ENCODE measurements at regions of chr11 and their contacts with region 1.

Region 1: GRCh38 chr11:90380206-90380605 is 157.4 kb upstream of the CHORDC1 start:
- DNase-seq: no peak
- ATAC-seq: no peak
- H3K4me3 ChIP-seq: no peak overlapping the region
- H3K27ac ChIP-seq: no peak overlapping the region
- H3K4me1 ChIP-seq: no peaks in the 10 kb centered on the region
- H3K27me3 ChIP-seq: no peaks in the 10 kb centered on the region
- CTCF ChIP-seq: no peak
- EP300 ChIP-seq: no peak
- POLR2A ChIP-seq: no peak
- RAD21 ChIP-seq: no peak

Region 2: GRCh38 chr11:90218606-90219005 is 161.6 kb before region 1 on chr11:
- CTCF ChIA-PET with region 1: no interaction called
- POLR2A ChIA-PET with region 1: no interaction called
- in situ Hi-C with region 1: no loop called
- intact Hi-C with region 1: no loop called
- DNase-seq: no peak
- ATAC-seq: no peak
- H3K4me3 ChIP-seq: no peak overlapping the region
- H3K27ac ChIP-seq: no peak overlapping the region
- H3K4me1 ChIP-seq: peaks cover 28% of the 10 kb centered on the region
- H3K27me3 ChIP-seq: no peaks in the 10 kb centered on the region; a peak in 1 of 5 replicates
- CTCF ChIP-seq: no peak
- EP300 ChIP-seq: no peak
- POLR2A ChIP-seq: no peak
- RAD21 ChIP-seq: no peak

Region 3: DNA sequence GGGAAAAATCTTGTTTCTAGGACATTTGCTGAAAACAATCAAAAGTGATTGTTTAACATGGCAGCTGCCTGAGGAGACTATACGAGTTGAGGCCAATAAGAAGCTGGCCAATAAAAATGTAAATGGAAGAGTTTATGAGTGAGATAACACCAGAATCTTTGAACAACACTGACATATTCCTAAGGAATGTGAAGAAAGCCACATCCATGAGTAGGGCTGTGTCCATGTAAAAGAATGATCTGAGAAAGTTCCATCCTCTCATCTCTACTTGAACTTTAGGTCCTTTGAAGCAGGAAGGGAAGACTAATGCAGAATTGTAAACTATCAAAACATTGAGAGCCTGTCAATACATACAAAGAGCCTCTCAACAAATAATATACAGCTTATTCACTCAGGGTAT is 150.4 kb before region 1 on chr11:
- CTCF ChIA-PET with region 1: no interaction called
- POLR2A ChIA-PET with region 1: no interaction called
- in situ Hi-C with region 1: no loop called
- intact Hi-C with region 1: no loop called
- DNase-seq: no peak
- ATAC-seq: no peak
- H3K4me3 ChIP-seq: no peak overlapping the region
- H3K27ac ChIP-seq: no peak overlapping the region
- H3K4me1 ChIP-seq: no peaks in the 10 kb centered on the region
- H3K27me3 ChIP-seq: no peaks in the 10 kb centered on the region
- CTCF ChIP-seq: no peak
- EP300 ChIP-seq: no peak
- POLR2A ChIP-seq: no peak
- RAD21 ChIP-seq: no peak

Region 4: GRCh38 chr11:90447618-90448017 is 67.4 kb after region 1 on chr11:
- CTCF ChIA-PET with region 1: no interaction called
- POLR2A ChIA-PET with region 1: no interaction called
- in situ Hi-C with region 1: loop called (anchors 10 kb)
- intact Hi-C with region 1: loop called (anchors 10 kb)
- DNase-seq: no peak
- ATAC-seq: no peak
- H3K4me3 ChIP-seq: no peak overlapping the region
- H3K27ac ChIP-seq: peak overlapping the region; percentile 27
- H3K4me1 ChIP-seq: peaks cover 23% of the 10 kb centered on the region
- H3K27me3 ChIP-seq: no peaks in the 10 kb centered on the region
- CTCF ChIP-seq: no peak
- EP300 ChIP-seq: no peak
- POLR2A ChIP-seq: no peak
- RAD21 ChIP-seq: no peak

Measured in HepG2 (cell line).